CD8-positive, alpha-beta memory T cell (primary cell): ENCODE measurements at regions of chr10 and their contacts with region 1.

Region 1: GRCh38 chr10:68720793-68721672 is at the start of gene CCAR1:
- DNase-seq: peak; percentile 93 to 98 (median 96)
- H3K4me3 ChIP-seq: peak within 1 kb of the TSS; percentile 87
- H3K4me3 Mint-ChIP-seq: peak within 1 kb of the TSS; percentile 88 to 100 (median 98)
- H3K27ac ChIP-seq: peak within 1 kb of the TSS; percentile 93
- H3K27ac Mint-ChIP-seq: peak within 1 kb of the TSS; percentile 92 to 99 (median 99)
- H3K4me1 ChIP-seq: peaks cover 15% of the 10 kb centered on the region
- H3K4me1 Mint-ChIP-seq: peaks cover 16 to 20% (median 17%) of the 10 kb centered on the region in 3 donors
- H3K27me3 ChIP-seq: no peaks in the 10 kb centered on the region
- H3K27me3 Mint-ChIP-seq: no peaks in the 10 kb centered on the region
- total RNA-seq, gene CCAR1: 132 to 147 TPM

Region 2: DNA sequence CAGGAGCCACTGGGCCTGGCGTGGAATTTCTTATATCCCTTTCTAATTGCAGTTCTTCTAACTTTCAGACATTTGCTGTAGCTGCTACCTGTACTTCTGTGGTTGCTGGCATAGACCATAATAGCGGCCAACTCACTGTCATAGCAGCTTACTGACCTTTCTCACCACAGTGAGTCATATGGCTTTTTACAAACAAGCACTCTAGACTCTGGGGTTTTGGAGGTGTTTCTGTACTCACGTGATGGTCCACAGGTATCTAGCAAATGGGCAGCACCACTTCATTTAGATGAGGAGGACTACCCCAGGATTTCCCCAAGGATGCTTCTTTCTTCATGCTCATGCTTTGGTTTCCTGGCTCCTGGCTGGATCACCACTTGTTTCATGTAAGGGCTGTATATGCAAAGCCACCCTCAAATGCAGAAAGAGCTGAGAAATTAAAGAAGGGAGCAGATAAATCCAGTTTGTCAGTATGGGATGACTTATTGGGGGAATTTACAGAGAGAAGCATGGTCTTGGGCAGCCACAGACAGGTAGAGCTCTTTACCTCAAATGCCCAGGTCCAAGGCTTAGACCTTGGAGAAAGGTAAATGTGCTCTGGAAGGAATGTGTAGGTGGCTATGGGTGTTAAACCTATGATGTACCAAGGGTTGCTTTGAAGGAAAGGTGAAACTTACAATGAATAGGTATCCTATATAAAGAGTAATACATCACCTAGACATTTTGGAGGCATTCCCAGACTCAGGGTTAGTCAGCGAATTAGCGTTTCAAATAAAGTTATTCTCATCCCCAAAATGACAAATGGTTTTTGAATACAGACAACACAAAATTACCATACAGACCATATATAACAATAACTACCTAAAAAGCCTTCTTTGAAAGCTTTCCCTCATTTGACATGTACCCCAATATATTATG is 177.8 kb before region 1 on chr10:
- CTCF ChIA-PET with region 1: no interaction called
- POLR2A ChIA-PET with region 1: interaction called, 10 read pairs
- DNase-seq: no peak
- H3K4me3 ChIP-seq: no peak overlapping the region
- H3K4me3 Mint-ChIP-seq: no peak overlapping the region
- H3K27ac ChIP-seq: no peak overlapping the region
- H3K27ac Mint-ChIP-seq: no peak overlapping the region
- H3K4me1 ChIP-seq: no peaks in the 10 kb centered on the region
- H3K4me1 Mint-ChIP-seq: no peaks in the 10 kb centered on the region
- H3K27me3 ChIP-seq: no peaks in the 10 kb centered on the region
- H3K27me3 Mint-ChIP-seq: no peaks in the 10 kb centered on the region